WTC11 (cell line): ENCODE measurements at regions of chr11 and their contacts with region 1.

Region 1: DNA sequence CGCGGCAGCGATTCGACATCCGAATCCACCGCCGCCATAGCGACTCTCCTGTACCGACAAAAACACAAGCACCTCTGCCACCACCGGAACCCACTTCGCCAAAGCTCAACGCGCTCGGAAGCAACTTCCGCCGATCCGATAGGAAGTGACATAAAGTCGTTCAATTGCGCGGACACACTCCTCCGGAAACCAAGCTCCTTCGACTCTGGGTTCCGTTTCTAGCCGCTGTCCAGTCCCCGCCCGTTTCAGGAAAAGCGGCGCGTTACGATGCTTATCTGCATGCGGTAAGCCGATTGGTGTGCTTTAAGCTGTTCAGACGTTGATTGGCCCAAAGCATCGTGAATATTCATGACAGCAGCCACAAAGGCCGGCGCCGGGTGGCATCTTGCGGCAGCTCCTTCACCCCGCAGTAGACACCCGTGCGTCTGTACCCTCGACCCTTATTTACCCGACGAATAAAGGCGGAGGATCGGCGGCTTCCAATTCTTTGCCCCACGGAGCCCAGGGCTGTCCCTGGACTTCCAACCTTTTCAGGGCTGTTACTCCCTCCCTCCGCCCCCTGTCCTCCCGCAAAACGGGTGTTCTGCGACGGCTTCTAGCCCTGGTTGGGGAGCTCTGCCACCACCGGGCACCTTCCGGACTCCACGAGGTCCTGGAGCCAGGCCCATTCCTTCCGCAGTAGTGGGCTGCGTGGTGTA is at the start of gene TUT1:
- DNase-seq: peak; percentile 96
- ATAC-seq: peak; percentile 89
- H3K4me3 Mint-ChIP-seq: peak within 1 kb of the TSS; percentile 99
- H3K27ac Mint-ChIP-seq: peak within 1 kb of the TSS; percentile 91
- H3K4me1 Mint-ChIP-seq: peaks cover 19% of the 10 kb centered on the region
- H3K27me3 Mint-ChIP-seq: no peaks in the 10 kb centered on the region; the same call in 1 of the 2 replicates
- CTCF ChIP-seq: no peak
- total RNA-seq, gene TUT1: 35.3 to 40.0 TPM (median 37.3 TPM) in 3 replicates

Region 2: DNA sequence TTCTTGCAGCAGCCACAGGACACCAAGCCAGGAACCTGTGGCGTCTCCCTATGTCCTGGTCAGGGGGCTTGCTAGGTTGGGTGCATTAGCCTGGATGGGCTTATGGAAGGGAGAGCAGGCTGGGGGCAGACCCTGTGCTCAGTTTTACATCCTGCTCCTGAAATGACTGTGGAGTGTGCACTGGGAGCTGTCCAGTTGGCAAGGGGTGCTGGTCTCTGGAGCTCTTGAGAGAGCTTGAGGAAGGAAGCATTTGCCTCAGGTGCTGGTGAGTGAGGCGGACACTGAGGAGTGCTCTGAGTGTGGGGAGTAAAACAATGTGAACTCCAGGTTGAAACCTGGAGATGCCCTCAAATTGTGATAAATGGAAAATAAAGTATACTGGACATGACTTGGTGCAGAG is 296.1 kb before region 1 on chr11:
- CTCF ChIA-PET with region 1: no interaction called
- POLR2A ChIA-PET with region 1: no interaction called
- DNase-seq: peak; percentile 58
- ATAC-seq: peak; percentile 60
- H3K4me3 Mint-ChIP-seq: no peak overlapping the region
- H3K27ac Mint-ChIP-seq: no peak overlapping the region
- H3K4me1 Mint-ChIP-seq: no peaks in the 10 kb centered on the region
- H3K27me3 Mint-ChIP-seq: peaks cover 12% of the 10 kb centered on the region
- CTCF ChIP-seq: no peak

Region 3: DNA sequence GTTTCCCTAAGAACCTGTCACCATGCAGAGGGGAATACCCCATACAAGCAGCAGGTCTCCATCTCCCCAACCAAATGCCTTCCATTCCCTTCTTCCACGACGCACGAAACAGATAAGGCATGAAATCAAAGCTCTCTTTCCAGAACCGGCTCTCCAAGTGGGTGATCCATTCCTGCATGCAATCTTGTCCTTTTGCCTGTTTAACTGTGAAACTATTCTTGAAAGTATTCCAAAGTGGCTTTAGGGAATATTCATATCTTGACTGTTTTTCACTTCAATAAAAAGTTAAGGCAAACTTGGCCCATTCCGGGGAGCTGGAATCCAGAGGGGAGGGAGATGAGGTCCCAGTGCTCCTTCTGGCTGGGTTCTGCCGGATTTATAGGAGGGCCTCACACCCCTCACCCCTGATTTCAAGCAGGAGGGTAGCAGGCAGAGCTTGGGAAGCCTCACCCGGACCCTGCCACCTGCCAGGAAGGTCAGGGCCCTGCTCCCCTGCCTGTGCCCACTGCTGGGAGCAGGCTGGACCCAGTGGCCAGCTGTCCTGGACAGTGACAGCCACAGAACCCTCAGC is 111.9 kb before region 1 on chr11:
- CTCF ChIA-PET with region 1: no interaction called
- POLR2A ChIA-PET with region 1: interaction called, 10 read pairs
- DNase-seq: no peak
- ATAC-seq: no peak
- H3K4me3 Mint-ChIP-seq: no peak overlapping the region
- H3K27ac Mint-ChIP-seq: no peak overlapping the region
- H3K4me1 Mint-ChIP-seq: 0 out of 2 replicates have a peak, but pooled peaks cover 3% of the 10 kb centered on the region
- H3K27me3 Mint-ChIP-seq: no peaks in the 10 kb centered on the region; the same call in 1 of the 2 replicates
- CTCF ChIP-seq: no peak

Region 4: DNA sequence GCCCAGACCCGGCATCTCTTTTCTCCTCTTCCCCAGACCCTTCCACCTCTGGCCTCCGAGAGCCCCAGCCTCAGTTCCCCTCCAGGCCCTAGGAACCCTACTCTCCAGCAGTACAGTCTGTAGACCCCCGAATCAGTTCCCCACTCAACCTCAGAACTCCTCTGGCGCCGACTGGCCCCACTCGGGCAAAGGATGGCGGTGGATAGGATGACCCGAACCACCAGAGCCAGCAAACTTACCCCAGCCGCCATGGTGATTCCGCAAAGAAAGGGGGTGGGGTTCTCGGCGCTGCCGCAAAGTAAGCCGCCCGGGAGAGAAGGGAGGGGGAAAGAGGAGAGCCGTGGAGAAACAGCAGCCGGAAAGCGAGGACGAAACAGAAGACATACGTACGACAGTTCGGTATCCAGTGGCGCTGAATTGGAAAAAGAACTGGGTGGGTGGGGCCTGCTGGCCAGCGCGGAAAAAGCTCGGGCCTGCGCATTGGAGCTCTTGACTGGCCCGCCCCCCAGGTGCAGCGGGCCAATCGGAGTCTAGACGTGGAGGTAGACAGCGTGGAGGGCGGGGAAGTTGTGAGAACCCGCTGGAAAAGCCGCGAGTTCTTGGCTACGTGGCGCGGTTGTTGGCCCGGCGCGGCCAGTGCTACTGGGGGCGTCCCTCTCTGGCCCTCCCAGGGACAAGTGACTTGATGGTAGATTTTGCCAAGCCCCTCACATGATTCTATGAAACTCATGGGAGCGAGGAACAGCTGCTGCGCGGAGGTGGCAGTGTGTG is 17.8 kb before region 1 on chr11 and contains the start of gene EEF1G:
- CTCF ChIA-PET with region 1: interaction called, 28 read pairs
- POLR2A ChIA-PET with region 1: interaction called, 44 read pairs
- DNase-seq: peak; percentile 98
- ATAC-seq: peak; percentile 97
- H3K4me3 Mint-ChIP-seq: peak within 1 kb of the TSS; percentile 99
- H3K27ac Mint-ChIP-seq: peak within 1 kb of the TSS; percentile 96
- H3K4me1 Mint-ChIP-seq: peaks cover 37% of the 10 kb centered on the region
- H3K27me3 Mint-ChIP-seq: no peaks in the 10 kb centered on the region
- CTCF ChIP-seq: no peak
- total RNA-seq, gene EEF1G: 1,667 to 1,857 TPM (median 1,846 TPM) in 3 replicates

Region 5: GRCh38 chr11:62621567-62622470 is 30.2 kb after region 1 on chr11 and contains the start of gene B3GAT3:
- CTCF ChIA-PET with region 1: interaction called, 27 read pairs
- POLR2A ChIA-PET with region 1: interaction called, 37 read pairs
- DNase-seq: peak; percentile 99
- ATAC-seq: peak; percentile 97
- H3K4me3 Mint-ChIP-seq: peak within 1 kb of the TSS; percentile 97
- H3K27ac Mint-ChIP-seq: peak within 1 kb of the TSS; percentile 93
- H3K4me1 Mint-ChIP-seq: peaks cover 16% of the 10 kb centered on the region
- H3K27me3 Mint-ChIP-seq: no peaks in the 10 kb centered on the region
- CTCF ChIP-seq: no peak
- total RNA-seq, gene B3GAT3: 41.2 to 43.9 TPM (median 43.3 TPM) in 3 replicates

Region 6: DNA sequence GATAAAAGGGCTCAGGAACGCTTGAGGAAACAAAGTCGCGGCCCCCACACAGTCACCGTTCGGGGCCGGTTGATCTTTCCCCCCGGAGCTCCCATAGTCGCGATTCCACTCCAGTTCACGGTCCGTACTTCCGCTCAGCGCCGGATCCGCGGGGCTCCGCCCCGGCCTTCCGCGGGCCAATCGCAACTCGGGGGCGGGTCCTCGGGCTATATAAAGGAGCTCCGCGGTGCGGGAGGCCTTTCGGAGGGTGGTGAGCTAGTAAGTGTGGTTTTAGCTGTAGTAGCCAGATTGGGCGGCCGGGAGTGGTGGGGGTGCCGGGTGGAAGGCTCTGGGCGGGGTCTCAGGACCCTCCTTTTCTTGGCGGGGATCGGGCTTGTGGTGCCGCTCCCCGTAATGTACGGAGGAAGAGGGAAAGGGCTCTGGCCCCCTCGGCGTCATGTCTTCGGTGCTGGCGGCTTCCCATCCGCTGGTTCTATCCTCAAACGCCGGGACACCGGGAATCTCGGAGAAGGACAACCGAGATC is 73.5 kb after region 1 on chr11 and contains the starts of genes C11orf98 and CSKMT:
- CTCF ChIA-PET with region 1: interaction called, 9 read pairs
- POLR2A ChIA-PET with region 1: interaction called, 42 read pairs
- DNase-seq: peak; percentile 97
- ATAC-seq: peak; percentile 79
- H3K4me3 Mint-ChIP-seq: peak within 1 kb of the TSS; percentile 97
- H3K27ac Mint-ChIP-seq: peak within 1 kb of the TSS; percentile 95
- H3K4me1 Mint-ChIP-seq: peaks cover 20% of the 10 kb centered on the region
- H3K27me3 Mint-ChIP-seq: no peaks in the 10 kb centered on the region
- CTCF ChIP-seq: no peak
- total RNA-seq, gene C11orf98: 132 to 154 TPM (median 137 TPM) in 3 replicates
- total RNA-seq, gene CSKMT: 60.7 to 75.6 TPM (median 60.9 TPM) in 3 replicates

Region 7: DNA sequence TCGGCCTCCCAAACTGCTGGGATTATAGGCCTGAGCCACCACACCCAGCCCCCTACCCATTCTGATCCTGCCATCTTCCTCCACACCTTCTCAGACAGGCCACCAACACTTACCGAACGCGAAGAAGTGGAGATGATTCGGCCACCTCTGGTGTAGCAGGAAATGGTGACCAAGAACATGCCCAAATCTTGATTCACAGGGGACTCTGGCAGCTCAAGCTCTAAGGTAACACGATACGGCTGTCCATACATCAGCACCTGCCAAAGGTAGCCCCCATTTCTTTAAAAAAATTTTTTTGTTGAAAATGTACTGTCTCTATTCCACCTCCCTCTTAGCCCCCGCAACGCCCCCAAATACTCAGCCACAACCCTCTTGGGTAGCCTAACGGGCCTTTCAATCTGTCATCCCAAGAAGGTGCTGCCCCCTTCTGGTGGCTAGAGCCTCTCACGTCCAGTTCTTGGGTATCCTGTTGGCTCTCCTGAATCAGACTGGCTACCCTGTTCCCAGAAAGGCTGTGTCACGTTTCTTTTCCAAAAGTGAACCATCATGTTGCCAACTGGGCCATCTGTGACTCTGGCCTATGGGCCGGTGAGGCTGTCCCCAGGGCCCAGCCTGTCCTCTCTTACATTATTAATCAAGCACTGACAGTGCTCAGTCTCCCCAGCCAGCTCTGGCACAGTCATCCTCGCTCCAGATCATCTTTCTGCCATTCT is 103.0 kb after region 1 on chr11:
- CTCF ChIA-PET with region 1: interaction called, 13 read pairs
- POLR2A ChIA-PET with region 1: interaction called, 4 read pairs
- DNase-seq: peak; percentile 86
- ATAC-seq: peak; percentile 84
- H3K4me3 Mint-ChIP-seq: no peak overlapping the region
- H3K27ac Mint-ChIP-seq: peak overlapping the region; percentile 73
- H3K4me1 Mint-ChIP-seq: peaks cover 2% of the 10 kb centered on the region; the same call in 1 of the 2 replicates
- H3K27me3 Mint-ChIP-seq: no peaks in the 10 kb centered on the region
- CTCF ChIP-seq: peak; percentile 84

Region 8: GRCh38 chr11:62726915-62727763 is 135.5 kb after region 1 on chr11 and contains the start of gene HNRNPUL2:
- CTCF ChIA-PET with region 1: interaction called, 11 read pairs
- POLR2A ChIA-PET with region 1: interaction called, 15 read pairs
- DNase-seq: peak; percentile 98
- ATAC-seq: peak; percentile 89
- H3K4me3 Mint-ChIP-seq: peak within 1 kb of the TSS; percentile 98
- H3K27ac Mint-ChIP-seq: peak within 1 kb of the TSS; percentile 100
- H3K4me1 Mint-ChIP-seq: peaks cover 25% of the 10 kb centered on the region
- H3K27me3 Mint-ChIP-seq: peaks cover 4% of the 10 kb centered on the region; the same call in 1 of the 2 replicates
- CTCF ChIP-seq: no peak
- total RNA-seq, gene HNRNPUL2: 42.1 to 42.9 TPM (median 42.2 TPM) in 3 replicates

Region 9: GRCh38 chr11:62778441-62778840 is 186.8 kb after region 1 on chr11:
- CTCF ChIA-PET with region 1: no interaction called
- POLR2A ChIA-PET with region 1: no interaction called
- DNase-seq: no peak
- ATAC-seq: no peak
- H3K4me3 Mint-ChIP-seq: no peak overlapping the region
- H3K27ac Mint-ChIP-seq: peak overlapping the region; percentile 89
- H3K4me1 Mint-ChIP-seq: no peaks in the 10 kb centered on the region
- H3K27me3 Mint-ChIP-seq: no peaks in the 10 kb centered on the region
- CTCF ChIP-seq: no peak